SK-N-SH (cell line): ENCODE measurements at regions of chr6 and their contacts with region 1.

Region 1: DNA sequence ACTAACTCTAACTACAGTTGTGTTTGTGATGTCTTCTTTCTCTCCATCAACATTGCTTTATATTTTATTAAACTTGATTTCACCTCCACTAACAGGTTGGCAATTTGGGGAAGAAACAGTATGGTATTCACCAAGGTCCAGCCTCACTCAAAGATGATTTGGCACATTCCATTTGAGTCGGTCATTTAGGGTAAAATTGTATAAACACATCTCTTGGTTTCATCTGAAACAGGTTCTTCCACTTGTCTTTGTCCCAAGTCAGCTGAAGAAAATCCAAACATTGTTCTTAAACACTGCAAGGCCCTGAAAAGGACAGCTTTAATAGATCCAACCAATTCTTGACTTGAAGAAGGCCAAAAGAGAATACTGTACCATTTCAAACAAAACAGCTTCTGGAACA is 104.9 kb upstream of the NT5E start:
- DNase-seq: no peak
- H3K4me3 ChIP-seq: no peak overlapping the region
- H3K27ac ChIP-seq: no peak overlapping the region
- H3K4me1 ChIP-seq: no peaks in the 10 kb centered on the region
- H3K27me3 ChIP-seq: no peaks in the 10 kb centered on the region; the same call in 1 of the 2 replicates
- CTCF ChIP-seq: no peak
- EP300 ChIP-seq: no peak
- RAD21 ChIP-seq: no peak

Region 2: GRCh38 chr6:85323435-85324040 is 21.5 kb before region 1 on chr6:
- CTCF ChIA-PET with region 1: interaction called, 16 read pairs
- POLR2A ChIA-PET with region 1: no interaction called
- DNase-seq: peak; percentile 59
- H3K4me3 ChIP-seq: no peak overlapping the region; a peak in 1 of 4 replicates
- H3K27ac ChIP-seq: no peak overlapping the region
- H3K4me1 ChIP-seq: no peaks in the 10 kb centered on the region
- H3K27me3 ChIP-seq: no peaks in the 10 kb centered on the region; the same call in 1 of the 2 replicates
- CTCF ChIP-seq: peak; percentile 98
- EP300 ChIP-seq: no peak
- RAD21 ChIP-seq: peak; percentile 86

Region 3: DNA sequence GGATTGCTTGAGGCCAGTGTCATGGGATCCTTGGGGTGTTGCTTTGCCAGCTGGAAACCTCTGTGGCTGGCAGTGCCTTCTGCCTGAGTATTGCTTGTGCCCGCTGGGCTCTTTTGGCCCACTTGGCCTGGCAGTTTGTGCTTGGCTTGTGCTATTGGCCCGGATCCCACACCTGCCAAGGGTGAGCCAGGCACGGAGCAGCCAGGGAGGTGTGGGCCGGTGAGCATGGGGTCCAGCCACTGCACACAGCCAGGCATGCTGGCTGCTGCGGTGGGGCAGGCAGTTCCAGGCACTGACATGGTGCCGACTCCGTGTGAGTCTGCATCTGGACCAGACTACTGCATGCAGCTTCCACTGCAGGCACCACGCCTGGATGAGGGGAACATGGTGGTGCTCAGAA is 360.2 kb after region 1 on chr6:
- CTCF ChIA-PET with region 1: no interaction called
- POLR2A ChIA-PET with region 1: no interaction called
- DNase-seq: no peak
- H3K4me3 ChIP-seq: no peak overlapping the region
- H3K27ac ChIP-seq: no peak overlapping the region
- H3K4me1 ChIP-seq: no peaks in the 10 kb centered on the region
- H3K27me3 ChIP-seq: no peaks in the 10 kb centered on the region
- CTCF ChIP-seq: no peak
- EP300 ChIP-seq: no peak
- RAD21 ChIP-seq: no peak